Activated CD8-positive, alpha-beta T cell treated with anti-CD3 and anti-CD28 coated beads for 36 hours (primary cell): ENCODE measurements at regions of chr12 and their contacts with region 1.

Region 1: GRCh38 chr12:101773650-101774162 is 34.4 kb upstream of the SYCP3 start:
- DNase-seq: peak; percentile 72
- ATAC-seq: peak; percentile 95
- H3K4me3 Mint-ChIP-seq: no peak overlapping the region
- H3K27ac Mint-ChIP-seq: no peak overlapping the region
- H3K4me1 Mint-ChIP-seq: peaks cover 4% of the 10 kb centered on the region
- H3K27me3 Mint-ChIP-seq: no peaks in the 10 kb centered on the region
- CTCF ChIP-seq: peak; percentile 86

Region 2: DNA sequence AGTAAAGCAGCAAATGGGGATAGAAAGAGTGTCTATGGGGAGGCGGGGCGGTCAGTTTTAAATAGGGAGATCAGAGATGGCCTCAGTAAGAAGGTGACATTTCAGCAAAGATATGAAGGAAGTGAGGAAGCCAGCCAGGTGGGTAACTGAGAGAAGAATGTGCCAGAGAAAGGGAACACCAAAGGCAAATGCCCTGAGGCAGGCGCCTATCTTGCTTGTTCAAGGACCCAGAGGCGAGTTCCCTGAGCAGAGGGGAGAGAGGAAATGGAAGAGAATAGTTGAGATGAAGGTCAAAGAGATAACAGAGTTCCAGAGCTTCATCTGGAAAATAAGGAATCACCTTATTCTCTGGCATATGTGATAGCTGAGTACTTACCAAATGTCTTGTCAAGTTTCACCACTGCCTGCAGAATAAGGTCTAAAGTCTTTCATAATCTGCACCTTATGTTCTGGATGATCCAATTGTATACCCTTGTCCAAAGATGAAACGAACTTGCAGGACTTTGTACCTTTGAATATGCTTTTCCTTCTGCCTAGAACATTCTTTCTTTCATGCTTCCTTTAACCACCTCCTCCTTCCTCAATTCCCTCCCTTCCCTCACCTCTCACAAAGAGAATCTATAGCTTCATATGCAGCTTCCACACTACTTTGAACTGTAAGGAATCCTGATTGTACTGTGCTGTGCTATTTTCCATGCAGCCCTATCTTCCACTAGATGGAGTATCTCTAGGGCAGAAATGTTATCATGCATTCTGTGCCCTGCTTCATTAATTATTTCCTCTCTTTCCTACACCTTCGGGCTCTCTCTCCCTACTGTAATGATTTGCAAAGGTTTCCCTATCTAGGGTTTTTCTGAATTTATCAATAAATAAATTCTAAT is 18.6 kb after region 1 on chr12:
- CTCF ChIA-PET with region 1: interaction called, 41 read pairs
- POLR2A ChIA-PET with region 1: no interaction called
- intact Hi-C with region 1: no loop called
- DNase-seq: no peak
- ATAC-seq: no peak
- H3K4me3 Mint-ChIP-seq: no peak overlapping the region
- H3K27ac Mint-ChIP-seq: peak overlapping the region; percentile 83
- H3K4me1 Mint-ChIP-seq: peaks cover 45% of the 10 kb centered on the region
- H3K27me3 Mint-ChIP-seq: no peaks in the 10 kb centered on the region
- CTCF ChIP-seq: no peak